GM23248 (cell line): ENCODE measurements at regions of chr15 and their contacts with region 1.

Region 1: DNA sequence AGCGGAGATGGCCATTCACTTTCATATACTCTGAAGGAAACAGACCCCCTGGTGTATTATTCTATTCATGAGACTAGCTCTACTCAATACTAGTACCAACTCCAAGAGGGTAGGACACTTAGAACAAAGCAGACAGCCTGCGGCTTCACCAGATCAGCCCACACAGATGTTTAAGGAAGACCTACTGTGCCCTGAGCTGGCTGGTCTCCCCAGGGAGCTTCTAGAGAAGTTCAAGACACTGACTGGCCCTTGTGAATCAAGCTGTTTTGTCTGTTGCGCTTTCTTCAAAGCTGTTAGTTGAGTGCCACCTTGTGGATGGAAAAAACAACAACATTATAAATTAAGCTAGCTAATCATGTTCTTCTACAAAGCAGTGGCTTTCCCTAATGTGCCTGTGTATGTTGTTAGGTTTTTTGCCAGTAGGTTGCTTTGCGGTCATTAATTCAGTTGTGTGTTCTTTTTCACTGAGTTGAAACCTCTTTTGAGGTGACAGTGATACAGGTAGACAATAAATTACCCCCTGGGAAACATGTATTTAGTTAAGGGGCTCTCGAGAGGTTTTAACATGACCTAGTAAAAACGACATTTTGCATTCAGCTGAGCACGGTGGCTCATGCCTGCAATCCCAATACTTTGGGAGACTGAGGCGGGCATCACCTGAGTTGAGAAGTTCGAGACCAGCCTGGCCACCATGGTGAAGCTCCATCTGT is 64.2 kb upstream of the MYZAP start:
- DNase-seq: peak; percentile 96
- H3K4me3 ChIP-seq: no peak overlapping the region
- H3K27ac ChIP-seq: no peak overlapping the region
- H3K4me1 ChIP-seq: peaks cover 17% of the 10 kb centered on the region
- H3K27me3 ChIP-seq: no peaks in the 10 kb centered on the region

Region 2: GRCh38 chr15:57158589-57158988 is 368.9 kb before region 1 on chr15:
- in situ Hi-C with region 1: loop called (anchors 10 kb)
- DNase-seq: peak; percentile 86
- H3K4me3 ChIP-seq: no peak overlapping the region
- H3K27ac ChIP-seq: peak overlapping the region; percentile 11; the same call in 1 of the 2 replicates
- H3K4me1 ChIP-seq: peaks cover 42% of the 10 kb centered on the region
- H3K27me3 ChIP-seq: no peaks in the 10 kb centered on the region